ENCODE measurements at regions of chr22 and their contacts with region 1.

Region 1: GRCh38 chr22:28009272-28009827 is 90.3 kb upstream of the PITPNB start:
- DNase-seq: peak; percentile 79
- H3K4me3 ChIP-seq: no peak overlapping the region
- H3K27ac ChIP-seq: no peak overlapping the region
- H3K4me1 ChIP-seq: peaks cover 10% of the 10 kb centered on the region
- CTCF ChIP-seq: peak; percentile 99

Region 2: GRCh38 chr22:27405672-27406388 is 603.5 kb before region 1 on chr22:
- CTCF ChIA-PET with region 1: no interaction called
- POLR2A ChIA-PET with region 1: no interaction called
- intact Hi-C with region 1: loop called (anchors 5 kb)
- DNase-seq: peak; percentile 46
- H3K4me3 ChIP-seq: no peak overlapping the region
- H3K27ac ChIP-seq: no peak overlapping the region
- H3K4me1 ChIP-seq: no peaks in the 10 kb centered on the region
- CTCF ChIP-seq: peak; percentile 86

Region 3: GRCh38 chr22:27603800-27604144 is 405.6 kb before region 1 on chr22:
- CTCF ChIA-PET with region 1: no interaction called
- POLR2A ChIA-PET with region 1: no interaction called
- intact Hi-C with region 1: no loop called
- DNase-seq: no peak
- H3K4me3 ChIP-seq: no peak overlapping the region
- H3K27ac ChIP-seq: no peak overlapping the region
- H3K4me1 ChIP-seq: no peaks in the 10 kb centered on the region
- CTCF ChIP-seq: no peak

Region 4: DNA sequence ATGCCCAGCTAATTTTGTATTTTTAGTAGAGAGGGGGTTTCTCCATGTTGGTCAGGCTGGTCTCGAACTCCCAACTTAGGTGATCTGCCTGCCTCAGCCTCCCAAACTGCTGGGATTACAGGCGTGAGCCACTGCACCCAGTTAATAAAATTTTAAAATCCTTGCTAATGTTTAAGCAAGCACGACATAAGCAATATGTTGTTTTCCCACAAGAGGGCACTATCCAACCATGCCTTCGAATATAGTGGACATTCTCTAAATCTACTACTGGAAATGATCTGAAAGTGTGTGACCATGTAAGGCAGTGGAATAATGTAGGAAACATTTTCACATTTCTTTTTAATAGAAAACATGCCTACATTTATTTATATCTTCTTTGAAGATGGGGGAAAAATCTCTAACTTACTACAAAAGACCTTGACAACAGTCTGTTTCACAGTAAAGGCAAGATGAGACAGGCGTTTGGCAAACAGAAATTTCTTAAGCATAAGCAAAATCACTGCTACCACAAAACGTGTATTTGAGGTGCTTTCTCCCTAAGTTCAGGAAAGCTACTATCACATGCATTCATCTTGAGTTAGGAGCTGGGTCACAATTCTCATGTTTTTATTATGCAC is 128.5 kb before region 1 on chr22:
- CTCF ChIA-PET with region 1: interaction called, 3 read pairs
- POLR2A ChIA-PET with region 1: no interaction called
- intact Hi-C with region 1: loop called (anchors 1 kb)
- DNase-seq: peak; percentile 74
- H3K4me3 ChIP-seq: no peak overlapping the region
- H3K27ac ChIP-seq: no peak overlapping the region
- H3K4me1 ChIP-seq: peaks cover 14% of the 10 kb centered on the region
- CTCF ChIP-seq: peak; percentile 85

Region 5: GRCh38 chr22:27885977-27886842 is 123.1 kb before region 1 on chr22:
- CTCF ChIA-PET with region 1: interaction called, 8 read pairs
- POLR2A ChIA-PET with region 1: no interaction called
- intact Hi-C with region 1: loop called (anchors 1 kb)
- DNase-seq: peak; percentile 62
- H3K4me3 ChIP-seq: no peak overlapping the region
- H3K27ac ChIP-seq: no peak overlapping the region
- H3K4me1 ChIP-seq: no peaks in the 10 kb centered on the region
- CTCF ChIP-seq: peak; percentile 98

Region 6: GRCh38 chr22:28171115-28171514 is 161.8 kb after region 1 on chr22:
- CTCF ChIA-PET with region 1: no interaction called
- POLR2A ChIA-PET with region 1: no interaction called
- intact Hi-C with region 1: no loop called
- DNase-seq: no peak
- H3K4me3 ChIP-seq: no peak overlapping the region
- H3K27ac ChIP-seq: no peak overlapping the region
- H3K4me1 ChIP-seq: no peaks in the 10 kb centered on the region
- CTCF ChIP-seq: no peak

Measured in OCI-LY7 (cell line).